Activated CD8-positive, alpha-beta T cell treated with anti-CD3 and anti-CD28 coated beads for 36 hours (primary cell): ENCODE measurements at regions of chr13 and their contacts with region 1.

Region 1: DNA sequence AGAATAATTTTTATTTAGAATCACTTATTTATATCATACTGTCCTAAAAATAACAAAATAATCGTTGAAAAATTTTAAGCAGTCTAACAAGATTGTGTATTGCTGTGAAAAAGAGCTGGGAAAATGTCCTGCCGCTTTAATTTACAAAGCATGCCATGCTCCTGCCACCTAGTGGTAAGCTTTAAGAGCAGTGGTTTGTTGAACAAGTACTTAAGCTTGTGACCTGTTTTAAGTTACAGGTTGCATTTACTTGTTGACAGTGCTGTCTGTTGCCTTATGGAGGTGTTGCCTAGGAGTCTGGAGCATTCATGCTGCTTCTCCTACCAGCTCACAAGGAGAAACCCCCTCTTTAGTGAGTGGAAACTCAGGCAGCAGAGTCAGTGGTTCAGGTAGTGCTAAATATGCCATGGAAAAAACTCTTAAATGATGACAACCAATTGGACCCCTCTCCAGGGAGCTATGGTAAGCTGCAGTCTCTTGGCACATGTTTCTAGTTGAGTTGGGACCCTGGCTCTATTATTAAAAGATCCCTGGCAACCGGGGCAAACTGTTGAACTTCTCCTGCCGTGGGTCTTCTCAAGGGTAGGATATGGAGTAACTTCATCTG is 68.4 kb downstream of the SPATA13 start:
- DNase-seq: peak; percentile 58
- ATAC-seq: peak; percentile 56
- H3K4me3 Mint-ChIP-seq: no peak overlapping the region
- H3K27ac Mint-ChIP-seq: no peak overlapping the region
- H3K4me1 Mint-ChIP-seq: peaks cover 63% of the 10 kb centered on the region
- H3K27me3 Mint-ChIP-seq: no peaks in the 10 kb centered on the region
- CTCF ChIP-seq: peak; percentile 84

Region 2: GRCh38 chr13:24020375-24020830 is 208.6 kb before region 1 on chr13:
- CTCF ChIA-PET with region 1: interaction called, 58 read pairs
- POLR2A ChIA-PET with region 1: no interaction called
- intact Hi-C with region 1: no loop called
- DNase-seq: peak; percentile 69
- ATAC-seq: peak; percentile 47
- H3K4me3 Mint-ChIP-seq: no peak overlapping the region
- H3K27ac Mint-ChIP-seq: no peak overlapping the region
- H3K4me1 Mint-ChIP-seq: peaks cover 8% of the 10 kb centered on the region
- H3K27me3 Mint-ChIP-seq: no peaks in the 10 kb centered on the region
- CTCF ChIP-seq: peak; percentile 79

Region 3: GRCh38 chr13:24053519-24054251 is 175.3 kb before region 1 on chr13:
- CTCF ChIA-PET with region 1: interaction called, 57 read pairs
- POLR2A ChIA-PET with region 1: interaction called, 4 read pairs
- intact Hi-C with region 1: loop called (anchors 2 kb)
- DNase-seq: peak; percentile 77
- ATAC-seq: peak; percentile 98
- H3K4me3 Mint-ChIP-seq: no peak overlapping the region
- H3K27ac Mint-ChIP-seq: no peak overlapping the region
- H3K4me1 Mint-ChIP-seq: peaks cover 8% of the 10 kb centered on the region
- H3K27me3 Mint-ChIP-seq: peaks cover 1% of the 10 kb centered on the region
- CTCF ChIP-seq: peak; percentile 85

Region 4: GRCh38 chr13:24241336-24241735 is 12.4 kb after region 1 on chr13:
- CTCF ChIA-PET with region 1: interaction called, 12 read pairs
- POLR2A ChIA-PET with region 1: no interaction called
- intact Hi-C with region 1: no loop called
- DNase-seq: no peak
- ATAC-seq: no peak
- H3K4me3 Mint-ChIP-seq: no peak overlapping the region
- H3K27ac Mint-ChIP-seq: no peak overlapping the region
- H3K4me1 Mint-ChIP-seq: peaks cover 16% of the 10 kb centered on the region
- H3K27me3 Mint-ChIP-seq: no peaks in the 10 kb centered on the region
- CTCF ChIP-seq: no peak

Region 5: DNA sequence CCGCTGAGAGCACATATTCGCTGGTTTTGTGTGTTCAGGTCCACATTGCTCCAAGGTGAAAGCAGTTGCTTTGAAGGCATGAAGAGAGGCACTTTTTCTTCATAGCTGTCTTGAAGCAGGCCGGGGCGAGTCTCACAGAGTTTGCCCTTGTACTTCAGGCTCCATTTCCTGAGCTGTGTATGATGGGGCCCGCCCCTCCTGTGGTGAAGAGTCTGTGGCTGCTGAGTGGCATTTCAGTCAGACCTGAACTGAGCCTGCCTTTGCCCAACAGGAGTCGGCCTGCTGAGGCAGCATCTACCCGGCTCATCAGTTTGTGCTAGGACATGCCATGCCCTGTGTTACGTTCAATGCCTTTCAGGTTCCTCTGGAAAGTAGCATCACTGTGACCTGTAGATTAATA is 36.0 kb after region 1 on chr13:
- CTCF ChIA-PET with region 1: interaction called, 24 read pairs
- POLR2A ChIA-PET with region 1: interaction called, 3 read pairs
- intact Hi-C with region 1: no loop called
- DNase-seq: peak; percentile 95
- ATAC-seq: peak; percentile 93
- H3K4me3 Mint-ChIP-seq: peak overlapping the region; percentile 70
- H3K27ac Mint-ChIP-seq: peak overlapping the region; percentile 96
- H3K4me1 Mint-ChIP-seq: peaks cover 90% of the 10 kb centered on the region
- H3K27me3 Mint-ChIP-seq: no peaks in the 10 kb centered on the region
- CTCF ChIP-seq: no peak